Caco-2 (cell line): ENCODE measurements at regions of chr5 and their contacts with region 1.

Region 1: GRCh38 chr5:177022384-177023308 is at the start of gene ZNF346:
- DNase-seq: peak; percentile 93
- H3K4me3 ChIP-seq: peak within 1 kb of the TSS; percentile 70
- H3K4me3 Mint-ChIP-seq: peak within 1 kb of the TSS; percentile 89
- H3K27ac Mint-ChIP-seq: peak within 1 kb of the TSS; percentile 90
- H3K4me1 ChIP-seq: peaks cover 7% of the 10 kb centered on the region
- H3K4me1 Mint-ChIP-seq: peaks cover 23% of the 10 kb centered on the region
- H3K27me3 ChIP-seq: no peaks in the 10 kb centered on the region
- H3K27me3 Mint-ChIP-seq: no peaks in the 10 kb centered on the region
- CTCF ChIP-seq: peak; percentile 29 to 53
- total RNA-seq, gene ZNF346: 24.2 and 29.3 TPM in 2 replicates

Region 2: DNA sequence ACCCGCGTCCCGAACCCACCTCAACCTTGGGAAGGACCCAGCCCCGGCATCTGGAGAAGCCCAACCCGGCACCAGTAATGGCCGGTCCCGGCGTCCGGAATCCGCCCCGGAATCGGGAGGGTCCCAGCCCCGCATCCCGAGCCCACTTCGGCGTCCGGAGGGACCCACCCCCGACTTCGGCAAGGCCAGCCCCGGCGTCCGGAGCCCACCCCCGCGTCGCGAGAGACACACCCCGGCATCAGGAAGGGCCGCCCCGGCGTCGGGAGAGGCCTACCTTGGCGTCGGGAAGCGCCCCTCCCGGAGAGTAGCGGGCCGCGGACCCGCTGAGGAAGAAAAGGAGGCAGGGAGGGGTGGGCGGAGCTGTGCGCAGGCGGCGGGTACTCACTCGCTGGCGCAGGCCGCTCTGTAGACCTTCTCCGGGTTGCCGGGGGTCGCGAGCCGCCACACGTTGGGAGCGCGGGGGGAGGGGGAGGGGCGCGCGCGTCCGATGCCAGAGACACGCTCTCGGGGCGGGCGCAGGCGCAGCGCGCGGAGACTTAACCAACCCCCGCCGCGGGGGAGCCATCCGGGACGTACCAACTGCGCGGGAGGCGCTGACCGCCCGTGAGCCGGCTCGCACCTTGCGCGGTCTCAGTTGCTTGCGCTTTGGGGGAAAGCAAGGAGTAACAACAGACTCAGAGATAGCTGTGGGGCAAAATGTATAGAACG is 16.2 kb before region 1 on chr5 and contains the start of gene UIMC1:
- CTCF ChIA-PET with region 1: interaction called, 3 read pairs
- POLR2A ChIA-PET with region 1: no interaction called
- intact Hi-C with region 1: loop called (anchors 2 kb)
- DNase-seq: peak; percentile 94 to 97
- H3K4me3 ChIP-seq: peak within 1 kb of the TSS; percentile 71
- H3K4me3 Mint-ChIP-seq: peak within 1 kb of the TSS; percentile 89
- H3K27ac Mint-ChIP-seq: peak within 1 kb of the TSS; percentile 93
- H3K4me1 ChIP-seq: peaks cover 5% of the 10 kb centered on the region; the same call in 1 of the 2 replicates
- H3K4me1 Mint-ChIP-seq: peaks cover 5% of the 10 kb centered on the region
- H3K27me3 ChIP-seq: no peaks in the 10 kb centered on the region
- H3K27me3 Mint-ChIP-seq: no peaks in the 10 kb centered on the region
- CTCF ChIP-seq: no peak
- total RNA-seq, gene UIMC1: 52.8 and 58.3 TPM in 2 replicates